Posterior cingulate gyrus (tissue), 11 donors: ENCODE measurements at regions of chrX and their contacts with region 1.

Region 1: GRCh38 chrX:154980330-154981096 is 42.0 kb downstream of the F8 start:
- DNase-seq: peak in 9 of 10 donors; percentile 18 to 93 (median 65)

Region 2: GRCh38 chrX:154918060-154918483 is 62.4 kb before region 1 on chrX:
- intact Hi-C with region 1: no loop called
- DNase-seq: peak in 6 of 10 donors; percentile 6 to 55 (median 15)

Region 3: DNA sequence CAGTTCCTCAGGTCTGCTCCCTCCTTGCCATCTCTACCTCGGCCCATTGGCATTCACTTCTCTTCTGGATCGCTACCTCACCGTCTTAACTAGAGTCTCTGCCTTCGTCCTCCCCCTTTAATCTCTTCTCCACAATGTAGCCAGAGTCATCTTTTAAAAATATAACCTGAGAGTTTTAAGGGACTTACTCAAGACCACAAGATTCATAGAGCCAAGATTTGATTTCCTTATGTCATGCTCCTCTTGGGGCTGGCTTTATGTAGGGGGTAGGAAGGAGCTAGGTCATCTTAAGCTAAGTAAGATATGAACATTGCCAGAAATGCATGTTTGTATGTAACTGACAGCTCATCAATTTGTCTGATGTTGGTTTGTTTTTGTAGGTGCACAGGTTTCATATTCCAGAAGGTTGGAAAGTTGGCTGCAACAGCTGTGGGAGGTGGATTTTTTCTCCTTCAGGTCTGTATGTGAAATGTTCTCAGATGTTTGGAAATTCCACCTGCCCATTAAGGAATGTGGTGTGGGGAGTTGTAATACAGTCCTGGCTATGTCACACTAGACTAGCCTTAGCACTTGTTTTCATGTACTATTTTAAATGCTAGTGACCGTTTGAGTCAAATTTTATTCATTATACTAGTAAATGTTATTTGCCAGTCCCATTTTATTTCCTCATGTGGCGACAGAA is 65.8 kb after region 1 on chrX:
- intact Hi-C with region 1: no loop called
- DNase-seq: no peak

Region 4: DNA sequence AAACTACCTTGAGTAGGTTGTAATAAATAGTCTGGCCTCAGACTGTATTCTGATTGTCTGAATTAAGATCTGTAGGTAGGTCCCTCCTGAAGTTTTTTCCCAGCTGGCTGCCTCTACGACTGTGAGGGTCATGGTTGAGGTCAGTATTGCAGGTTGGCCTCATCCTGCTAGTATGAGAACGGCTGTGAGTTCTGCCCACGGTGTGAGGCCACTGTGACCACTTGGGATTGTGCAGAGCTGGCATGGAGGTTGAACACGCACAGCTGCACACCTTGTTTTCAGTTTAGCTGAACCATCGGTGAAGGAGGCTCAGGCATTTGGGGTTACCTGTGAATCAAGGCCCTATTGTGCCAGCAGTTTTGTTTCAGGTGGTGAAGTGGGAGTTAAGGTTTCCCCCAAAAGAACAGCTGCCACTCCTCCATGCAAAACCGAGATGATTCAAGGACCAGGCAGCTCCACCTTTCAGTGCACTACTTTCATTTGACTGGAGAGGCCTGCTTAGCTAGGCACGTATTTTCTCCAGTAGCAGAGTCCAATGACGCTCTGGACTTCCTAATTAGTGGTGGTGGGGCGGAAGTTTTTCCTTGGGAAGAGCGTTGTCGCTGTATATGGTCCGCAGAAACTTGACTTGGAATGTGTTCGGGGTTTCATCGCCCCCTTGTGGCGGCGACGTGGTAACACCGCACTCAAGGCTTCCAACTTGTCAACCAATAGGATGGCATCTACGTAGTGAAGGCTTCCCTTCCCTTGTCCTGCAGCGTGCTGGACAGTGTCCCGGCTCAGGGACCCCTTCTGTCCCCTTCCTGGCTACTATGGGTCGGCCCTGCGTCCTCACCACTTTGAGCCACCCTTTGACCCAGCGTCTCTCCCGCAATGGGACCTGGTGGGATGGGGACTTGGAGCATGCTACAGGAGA is 76.6 kb after region 1 on chrX:
- intact Hi-C with region 1: loop called (anchors 2 kb)
- DNase-seq: peak in 9 of 10 donors; percentile 17 to 93 (median 50)